SK-N-SH (cell line): ENCODE measurements at regions of chr17 and their contacts with region 1.

Region 1: DNA sequence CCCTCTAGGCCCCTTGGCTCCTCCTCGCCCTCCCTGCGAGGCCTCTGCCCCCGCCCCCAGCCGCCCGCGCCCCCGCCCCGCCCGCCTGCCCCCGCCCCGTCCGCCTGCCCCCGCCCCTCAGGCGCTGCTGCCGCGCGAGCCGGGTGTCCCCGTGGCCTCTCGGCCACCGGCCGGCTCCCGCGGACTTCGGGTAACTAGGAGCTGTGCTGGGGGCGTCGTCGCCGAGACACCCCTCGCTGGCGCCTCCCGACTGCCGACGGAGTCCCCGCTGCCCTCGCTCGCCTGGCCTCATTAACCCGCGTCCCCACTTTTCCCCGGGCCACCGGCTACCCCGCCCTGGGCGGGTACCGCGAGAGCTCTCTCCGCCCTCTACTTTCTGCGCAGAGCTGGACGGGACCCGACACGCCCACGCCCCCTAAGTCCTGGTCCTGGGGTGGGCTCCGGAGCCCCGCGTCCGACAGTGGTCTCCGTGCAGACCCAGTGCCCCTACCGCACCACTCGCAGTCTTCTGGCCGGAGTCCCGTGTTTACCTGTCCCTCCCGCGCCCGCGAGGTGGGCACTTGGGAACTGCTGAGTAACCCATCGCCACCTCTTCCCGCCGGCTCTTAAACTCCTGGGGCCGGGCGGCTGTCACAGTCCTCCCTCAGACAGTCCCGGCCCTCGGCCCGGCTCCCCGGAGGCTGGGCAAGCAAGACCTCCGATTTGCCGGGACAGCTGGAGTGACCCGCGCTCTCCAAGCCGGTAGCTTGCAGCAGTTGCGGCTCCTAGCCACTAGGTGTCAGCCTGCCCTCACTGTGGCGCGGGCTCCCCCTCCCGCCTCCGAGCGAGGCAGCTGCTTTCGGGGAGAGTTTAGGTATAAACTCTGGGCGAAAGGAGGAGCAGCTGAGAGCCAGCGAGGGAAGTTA is at the start of gene TLCD1:
- DNase-seq: peak; percentile 92
- H3K4me3 ChIP-seq: peak within 1 kb of the TSS; percentile 62 to 81
- H3K27ac ChIP-seq: peak within 1 kb of the TSS; percentile 88 to 97
- H3K4me1 ChIP-seq: peaks cover 16 to 41% of the 10 kb centered on the region in 2 experiments
- H3K27me3 ChIP-seq: no peaks in the 10 kb centered on the region
- CTCF ChIP-seq: peak; percentile 98
- EP300 ChIP-seq: no peak; a peak in 1 of 4 replicates
- RAD21 ChIP-seq: peak; percentile 98
- polyA plus RNA-seq, gene TLCD1: 18.3 and 21.6 TPM in 2 replicates

Region 2: GRCh38 chr17:28473542-28473941 is 252.9 kb before region 1 on chr17 and contains the start of gene SLC13A2:
- CTCF ChIA-PET with region 1: no interaction called
- POLR2A ChIA-PET with region 1: no interaction called
- DNase-seq: no peak
- H3K4me3 ChIP-seq: no peak within 1 kb of the TSS
- H3K27ac ChIP-seq: no peak within 1 kb of the TSS
- H3K4me1 ChIP-seq: peaks cover 0 to 2% of the 10 kb centered on the region in 2 experiments; a peak in 1 of 4 replicates
- H3K27me3 ChIP-seq: 0 out of 2 replicates have a peak, but pooled peaks cover 15% of the 10 kb centered on the region
- CTCF ChIP-seq: no peak
- EP300 ChIP-seq: no peak
- RAD21 ChIP-seq: no peak
- polyA plus RNA-seq, gene SLC13A2: not detected in 2 replicates

Region 3: GRCh38 chr17:28612936-28613872 is 113.3 kb before region 1 on chr17:
- CTCF ChIA-PET with region 1: no interaction called
- POLR2A ChIA-PET with region 1: no interaction called
- DNase-seq: peak; percentile 70
- H3K4me3 ChIP-seq: no peak overlapping the region
- H3K27ac ChIP-seq: no peak overlapping the region
- H3K4me1 ChIP-seq: no peaks in the 10 kb centered on the region
- H3K27me3 ChIP-seq: no peaks in the 10 kb centered on the region
- CTCF ChIP-seq: peak; percentile 72
- EP300 ChIP-seq: no peak
- RAD21 ChIP-seq: peak; percentile 75

Region 4: GRCh38 chr17:28661635-28662537 is 64.6 kb before region 1 on chr17 and contains the starts of genes SDF2 and SUPT6H:
- CTCF ChIA-PET with region 1: interaction called, 22 read pairs
- POLR2A ChIA-PET with region 1: interaction called, 3 read pairs
- DNase-seq: peak; percentile 95
- H3K4me3 ChIP-seq: peak within 1 kb of the TSS; percentile 91 to 94
- H3K27ac ChIP-seq: peak within 1 kb of the TSS; percentile 96
- H3K4me1 ChIP-seq: peaks cover 7 to 13% of the 10 kb centered on the region in 2 experiments; a peak in 3 of 4 replicates
- H3K27me3 ChIP-seq: no peaks in the 10 kb centered on the region
- CTCF ChIP-seq: no peak
- EP300 ChIP-seq: no peak
- RAD21 ChIP-seq: no peak
- polyA plus RNA-seq, gene SDF2: 108 and 114 TPM in 2 replicates
- polyA plus RNA-seq, gene SUPT6H: 26.7 and 26.9 TPM in 2 replicates

Region 5: GRCh38 chr17:28743225-28744103 is 17.0 kb after region 1 on chr17 and contains the start of gene TRAF4:
- CTCF ChIA-PET with region 1: interaction called, 612 read pairs
- POLR2A ChIA-PET with region 1: interaction called, 90 read pairs
- DNase-seq: peak; percentile 92
- H3K4me3 ChIP-seq: peak within 1 kb of the TSS; percentile 83 to 95
- H3K27ac ChIP-seq: peak within 1 kb of the TSS; percentile 97 to 98
- H3K4me1 ChIP-seq: peaks cover 23 to 46% of the 10 kb centered on the region in 2 experiments; a peak in 3 of 4 replicates
- H3K27me3 ChIP-seq: no peaks in the 10 kb centered on the region
- CTCF ChIP-seq: no peak
- EP300 ChIP-seq: 0 out of 4 replicates have a peak, but pooled peaks of 1 of the 2 experiments have one; percentile 2
- RAD21 ChIP-seq: 0 out of 2 replicates have a peak, but pooled peaks have one; percentile 10
- polyA plus RNA-seq, gene TRAF4: 95.7 and 104 TPM in 2 replicates

Region 6: DNA sequence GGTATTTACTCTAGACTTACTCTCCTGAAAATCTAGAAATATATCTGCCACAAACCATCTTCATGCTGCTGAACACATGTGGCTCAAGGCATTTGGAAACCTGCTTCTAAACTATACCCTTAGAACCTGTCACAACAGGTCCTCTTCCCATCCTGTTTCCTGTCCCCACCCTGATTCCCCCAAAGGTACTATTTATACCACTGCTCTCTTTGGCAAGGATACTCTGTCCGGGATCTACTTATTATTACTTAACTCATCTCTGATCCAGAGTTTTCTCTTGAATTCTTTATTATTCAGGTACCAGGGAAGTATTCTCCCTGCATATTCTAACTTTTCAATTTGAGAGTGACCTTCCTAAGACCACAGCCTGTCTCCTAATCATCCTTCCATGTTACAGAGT is 50.7 kb after region 1 on chr17:
- CTCF ChIA-PET with region 1: interaction called, 10 read pairs
- POLR2A ChIA-PET with region 1: no interaction called
- DNase-seq: no peak
- H3K4me3 ChIP-seq: no peak overlapping the region
- H3K27ac ChIP-seq: no peak overlapping the region
- H3K4me1 ChIP-seq: no peaks in the 10 kb centered on the region
- H3K27me3 ChIP-seq: no peaks in the 10 kb centered on the region
- CTCF ChIP-seq: no peak
- EP300 ChIP-seq: no peak
- RAD21 ChIP-seq: no peak

Region 7: DNA sequence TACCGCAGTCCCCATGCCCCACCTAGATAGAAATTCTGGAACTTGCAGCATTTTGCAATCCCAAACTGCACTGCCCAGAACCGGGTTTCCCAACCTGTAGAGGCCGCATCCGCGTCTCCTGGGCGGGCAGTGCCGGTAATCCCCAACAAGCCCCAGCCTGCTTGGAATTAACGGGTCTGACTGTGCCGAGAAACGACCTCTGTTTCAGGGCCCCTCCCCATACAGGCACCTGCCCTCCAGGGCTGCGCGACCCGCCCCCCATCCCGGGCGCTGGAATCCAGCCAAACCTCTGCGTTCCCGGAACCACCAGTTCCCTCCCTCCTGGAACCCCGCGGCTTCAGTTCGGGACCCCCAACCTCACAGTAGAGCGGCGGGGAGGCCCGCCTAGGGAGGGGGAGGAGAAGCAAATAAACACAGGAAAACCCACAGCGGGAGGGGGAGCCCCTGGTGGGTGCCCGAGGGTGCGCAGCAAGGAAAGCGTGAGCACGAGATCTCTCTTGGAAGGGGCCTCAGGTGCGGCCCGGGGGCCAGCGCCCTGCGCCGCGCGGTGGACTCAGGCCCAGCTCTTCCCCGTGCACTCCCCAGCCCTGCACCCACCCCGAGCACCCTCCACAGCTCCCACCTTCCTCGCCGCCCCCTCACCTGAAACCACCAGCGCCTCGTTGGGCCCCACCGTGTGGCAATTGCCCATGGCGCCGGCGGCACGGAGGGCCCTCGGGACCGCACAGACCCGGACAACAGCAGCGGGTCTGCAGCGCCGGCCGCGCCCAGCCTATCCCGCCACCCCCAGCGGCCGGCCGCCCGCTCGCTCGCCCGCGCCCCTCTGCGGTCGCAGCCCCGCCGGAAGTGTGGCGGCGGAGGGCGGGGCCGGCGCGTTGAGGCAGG is 170.6 kb after region 1 on chr17 and contains the start of gene FLOT2:
- CTCF ChIA-PET with region 1: interaction called, 41 read pairs
- POLR2A ChIA-PET with region 1: interaction called, 4 read pairs
- DNase-seq: peak; percentile 92
- H3K4me3 ChIP-seq: peak within 1 kb of the TSS; percentile 76 to 98
- H3K27ac ChIP-seq: peak within 1 kb of the TSS; percentile 48 to 85; a peak in 3 of 4 replicates
- H3K4me1 ChIP-seq: peaks cover 18 to 22% of the 10 kb centered on the region in 2 experiments; a peak in 2 of 4 replicates
- H3K27me3 ChIP-seq: no peaks in the 10 kb centered on the region
- CTCF ChIP-seq: peak; percentile 38
- EP300 ChIP-seq: no peak
- RAD21 ChIP-seq: 0 out of 2 replicates have a peak, but pooled peaks have one; percentile 2
- polyA plus RNA-seq, gene FLOT2: 89.8 and 105 TPM in 2 replicates

Region 8: DNA sequence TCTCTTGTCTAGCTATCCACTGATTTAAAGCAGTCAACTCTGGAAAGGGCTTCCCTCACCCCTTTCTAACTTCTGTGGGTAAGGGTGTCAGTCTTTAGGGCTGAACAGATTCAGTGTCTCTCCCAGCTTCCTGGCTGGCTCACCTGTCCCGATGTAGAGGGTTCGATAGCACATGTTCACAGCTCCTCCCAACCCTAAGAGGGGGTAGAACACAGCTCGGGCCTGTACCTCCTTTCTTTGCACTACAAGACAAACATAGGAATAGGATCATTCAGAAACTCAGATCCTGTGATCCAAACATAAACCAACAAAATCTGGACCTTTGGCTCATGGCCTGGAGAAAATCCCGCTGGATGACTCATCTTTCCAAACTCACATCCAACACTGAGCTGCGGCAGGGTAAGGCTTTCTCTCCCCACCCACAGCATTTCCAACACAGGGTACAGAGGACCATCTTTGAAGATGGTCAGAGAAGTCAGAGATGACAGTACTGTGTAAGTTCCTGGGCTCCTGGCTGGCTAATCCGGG is 182.2 kb after region 1 on chr17:
- CTCF ChIA-PET with region 1: interaction called, 16 read pairs
- POLR2A ChIA-PET with region 1: no interaction called
- DNase-seq: no peak
- H3K4me3 ChIP-seq: no peak overlapping the region
- H3K27ac ChIP-seq: peak overlapping the region in 1 of 2 experiments; percentile 51; a peak in 1 of 4 replicates
- H3K4me1 ChIP-seq: no peaks in the 10 kb centered on the region; a peak in 1 of 4 replicates
- H3K27me3 ChIP-seq: no peaks in the 10 kb centered on the region
- CTCF ChIP-seq: no peak
- EP300 ChIP-seq: no peak
- RAD21 ChIP-seq: no peak

Region 9: DNA sequence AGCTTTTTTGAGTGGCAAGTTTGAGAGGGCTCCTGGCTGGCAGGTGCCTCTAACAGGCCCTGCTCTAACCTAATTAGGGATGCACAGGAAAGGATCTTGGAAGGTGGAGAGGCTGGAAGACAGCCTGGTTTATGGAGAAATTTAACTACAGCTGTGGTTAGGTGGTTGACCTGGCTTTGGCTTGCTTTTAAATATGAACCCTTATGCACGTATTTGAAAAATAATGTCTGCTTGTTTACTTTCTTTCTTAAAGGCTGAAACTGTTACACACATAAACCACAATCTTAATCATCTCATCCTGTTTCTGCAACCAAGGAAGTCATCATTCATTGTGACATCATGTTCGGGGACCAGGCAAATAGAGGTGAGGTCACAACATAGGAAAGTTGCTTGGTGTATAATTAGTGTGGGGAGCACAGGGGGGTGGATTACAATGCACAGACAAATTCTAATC is 199.5 kb after region 1 on chr17:
- CTCF ChIA-PET with region 1: interaction called, 23 read pairs
- POLR2A ChIA-PET with region 1: no interaction called
- DNase-seq: no peak
- H3K4me3 ChIP-seq: peak overlapping the region in 1 of 2 experiments; percentile 12; a peak in 1 of 4 replicates
- H3K27ac ChIP-seq: peak overlapping the region in 1 of 2 experiments; percentile 60; a peak in 2 of 4 replicates
- H3K4me1 ChIP-seq: peaks cover 10 to 16% of the 10 kb centered on the region in 2 experiments; a peak in 2 of 4 replicates
- H3K27me3 ChIP-seq: no peaks in the 10 kb centered on the region
- CTCF ChIP-seq: no peak
- EP300 ChIP-seq: no peak
- RAD21 ChIP-seq: no peak